MCF 10A (cell line): ENCODE measurements at regions of chr10 and their contacts with region 1.

Region 1: GRCh38 chr10:120423431-120424197 is 33.4 kb upstream of the PLPP4 start:
- DNase-seq: peak; percentile 70
- H3K4me3 Mint-ChIP-seq: no peak overlapping the region
- H3K27ac Mint-ChIP-seq: no peak overlapping the region
- H3K4me1 Mint-ChIP-seq: peaks cover 26% of the 10 kb centered on the region
- H3K27me3 Mint-ChIP-seq: peaks cover 4% of the 10 kb centered on the region
- CTCF ChIP-seq: peak; percentile 91

Region 2: DNA sequence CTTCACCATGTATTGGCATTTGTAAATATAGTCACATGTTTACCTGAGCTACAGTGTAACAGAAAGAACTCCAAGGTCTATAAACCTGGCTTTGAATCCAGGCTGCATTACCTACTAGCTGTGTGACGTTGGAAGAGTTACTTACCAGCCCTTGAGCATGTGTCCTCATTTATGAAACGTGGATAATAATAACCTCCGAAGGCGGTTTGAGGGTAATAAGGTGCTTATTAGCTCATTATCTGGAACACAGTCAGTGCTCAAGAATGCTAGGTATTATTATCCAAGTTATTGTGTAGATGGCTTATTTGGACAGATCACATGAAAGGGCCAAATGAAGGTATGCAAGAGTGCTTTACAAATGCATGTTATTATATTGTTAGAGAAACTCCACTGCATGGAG is 466.2 kb before region 1 on chr10:
- CTCF ChIA-PET with region 1: no interaction called
- POLR2A ChIA-PET with region 1: no interaction called
- intact Hi-C with region 1: no loop called
- DNase-seq: no peak
- H3K4me3 Mint-ChIP-seq: no peak overlapping the region
- H3K27ac Mint-ChIP-seq: no peak overlapping the region
- H3K4me1 Mint-ChIP-seq: no peaks in the 10 kb centered on the region
- H3K27me3 Mint-ChIP-seq: no peaks in the 10 kb centered on the region
- CTCF ChIP-seq: no peak

Region 3: DNA sequence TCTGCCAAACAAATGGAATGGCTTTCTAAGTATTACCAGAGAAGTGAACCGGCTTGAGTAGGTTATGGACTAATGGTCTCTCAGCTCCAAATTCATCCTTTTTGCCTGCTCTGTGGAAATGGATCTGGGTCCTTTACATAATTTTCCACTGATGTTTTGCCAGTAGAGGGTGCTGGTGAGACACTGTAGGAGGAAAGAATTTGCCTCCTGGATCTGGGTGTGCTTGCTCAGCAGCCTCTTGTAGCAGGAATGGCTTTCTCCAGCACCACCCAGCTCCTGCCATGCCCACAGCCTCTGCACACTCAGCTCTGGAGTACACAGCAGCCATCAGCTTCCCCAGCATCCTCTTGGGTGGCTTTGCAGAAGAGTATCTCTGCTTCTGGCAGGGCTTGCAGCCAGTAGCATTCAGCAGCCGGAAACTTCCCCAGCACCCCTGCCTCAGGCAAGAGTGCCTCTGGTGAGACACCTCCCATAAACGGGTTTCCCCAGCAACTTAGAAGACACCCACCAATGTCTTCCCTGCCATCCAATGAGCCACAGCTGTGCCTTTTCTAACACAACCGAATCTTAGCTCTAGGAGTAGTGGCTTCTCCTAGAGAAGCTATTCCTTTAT is 201.6 kb before region 1 on chr10:
- CTCF ChIA-PET with region 1: interaction called, 14 read pairs
- POLR2A ChIA-PET with region 1: no interaction called
- intact Hi-C with region 1: loop called (anchors 10 kb)
- DNase-seq: peak; percentile 78
- H3K4me3 Mint-ChIP-seq: no peak overlapping the region
- H3K27ac Mint-ChIP-seq: no peak overlapping the region
- H3K4me1 Mint-ChIP-seq: no peaks in the 10 kb centered on the region
- H3K27me3 Mint-ChIP-seq: peaks cover under 1% of the 10 kb centered on the region
- CTCF ChIP-seq: peak; percentile 82

Region 4: DNA sequence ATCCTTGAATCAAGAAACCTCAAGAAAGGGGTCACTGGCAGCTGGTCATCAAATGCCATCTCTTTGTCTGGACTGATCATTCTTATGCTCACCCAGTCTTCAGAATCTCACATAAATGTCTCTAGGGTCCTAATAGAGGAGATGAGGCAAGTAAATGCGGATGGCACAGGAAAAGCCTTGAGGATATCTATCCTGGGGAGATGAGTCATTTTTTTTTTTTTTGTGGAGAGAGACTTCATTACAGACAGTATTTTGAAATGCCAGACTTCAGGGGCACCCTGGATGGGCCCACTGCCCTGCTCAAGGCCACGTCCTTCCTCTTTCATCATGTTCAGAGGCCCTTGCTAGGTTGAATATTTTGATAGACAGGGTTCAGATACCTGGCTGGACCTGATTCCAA is 13.9 kb after region 1 on chr10:
- CTCF ChIA-PET with region 1: interaction called, 16 read pairs
- POLR2A ChIA-PET with region 1: no interaction called
- intact Hi-C with region 1: no loop called
- DNase-seq: peak; percentile 29
- H3K4me3 Mint-ChIP-seq: no peak overlapping the region
- H3K27ac Mint-ChIP-seq: no peak overlapping the region
- H3K4me1 Mint-ChIP-seq: peaks cover under 1% of the 10 kb centered on the region
- H3K27me3 Mint-ChIP-seq: no peaks in the 10 kb centered on the region
- CTCF ChIP-seq: no peak

Region 5: GRCh38 chr10:120586471-120586872 is 162.9 kb after region 1 on chr10:
- CTCF ChIA-PET with region 1: interaction called, 7 read pairs
- POLR2A ChIA-PET with region 1: no interaction called
- intact Hi-C with region 1: loop called (anchors 5 kb)
- DNase-seq: peak; percentile 55
- H3K4me3 Mint-ChIP-seq: no peak overlapping the region
- H3K27ac Mint-ChIP-seq: no peak overlapping the region
- H3K4me1 Mint-ChIP-seq: no peaks in the 10 kb centered on the region
- H3K27me3 Mint-ChIP-seq: peaks cover 81% of the 10 kb centered on the region
- CTCF ChIP-seq: no peak

Region 6: GRCh38 chr10:120646738-120647456 is 223.3 kb after region 1 on chr10:
- CTCF ChIA-PET with region 1: interaction called, 13 read pairs
- POLR2A ChIA-PET with region 1: no interaction called
- intact Hi-C with region 1: no loop called
- DNase-seq: no peak
- H3K4me3 Mint-ChIP-seq: no peak overlapping the region
- H3K27ac Mint-ChIP-seq: no peak overlapping the region
- H3K4me1 Mint-ChIP-seq: no peaks in the 10 kb centered on the region
- H3K27me3 Mint-ChIP-seq: peaks cover 15% of the 10 kb centered on the region
- CTCF ChIP-seq: no peak

Region 7: GRCh38 chr10:120735773-120736371 is 312.3 kb after region 1 on chr10:
- CTCF ChIA-PET with region 1: interaction called, 178 read pairs
- POLR2A ChIA-PET with region 1: no interaction called
- intact Hi-C with region 1: loop called (anchors 1 kb)
- DNase-seq: peak; percentile 37
- H3K4me3 Mint-ChIP-seq: no peak overlapping the region
- H3K27ac Mint-ChIP-seq: no peak overlapping the region
- H3K4me1 Mint-ChIP-seq: peaks cover 13% of the 10 kb centered on the region
- H3K27me3 Mint-ChIP-seq: peaks cover 45% of the 10 kb centered on the region
- CTCF ChIP-seq: peak; percentile 60